Transverse colon (tissue), 4 donors: ENCODE measurements at regions of chr17 and their contacts with region 1.

Region 1: GRCh38 chr17:4913994-4914393 is 11.1 kb upstream of the CHRNE start:
- DNase-seq: no peak
- H3K4me3 ChIP-seq: no peak overlapping the region
- H3K27ac ChIP-seq: no peak overlapping the region
- H3K4me1 ChIP-seq: peaks cover 3 to 13% (median 10%) of the 10 kb centered on the region in 4 donors
- H3K27me3 ChIP-seq: no peaks in the 10 kb centered on the region
- CTCF ChIP-seq: peak in 1 of 5 experiments; percentile 25
- EP300 ChIP-seq: no peak
- POLR2A ChIP-seq: no peak

Region 2: GRCh38 chr17:4858882-4859260 is 55.1 kb before region 1 on chr17:
- in situ Hi-C with region 1: no loop called
- intact Hi-C with region 1: no loop called
- DNase-seq: peak; percentile 40
- H3K4me3 ChIP-seq: no peak overlapping the region
- H3K27ac ChIP-seq: peak overlapping the region; percentile 10 to 59 (median 56)
- H3K4me1 ChIP-seq: peaks cover 0 to 24% (median 12%) of the 10 kb centered on the region in 4 donors
- H3K27me3 ChIP-seq: no peaks in the 10 kb centered on the region
- CTCF ChIP-seq: no peak
- EP300 ChIP-seq: no peak
- POLR2A ChIP-seq: no peak

Region 3: GRCh38 chr17:4969551-4970173 is 55.7 kb after region 1 on chr17:
- in situ Hi-C with region 1: loop called in 1 of 4 experiments (anchors 10 kb)
- intact Hi-C with region 1: no loop called
- DNase-seq: no peak
- H3K4me3 ChIP-seq: no peak overlapping the region
- H3K27ac ChIP-seq: peak overlapping the region; percentile 91 to 98 (median 96)
- H3K4me1 ChIP-seq: peaks cover 14 to 33% (median 26%) of the 10 kb centered on the region in 4 donors
- H3K27me3 ChIP-seq: no peaks in the 10 kb centered on the region
- CTCF ChIP-seq: no peak
- EP300 ChIP-seq: no peak
- POLR2A ChIP-seq: no peak

Region 4: DNA sequence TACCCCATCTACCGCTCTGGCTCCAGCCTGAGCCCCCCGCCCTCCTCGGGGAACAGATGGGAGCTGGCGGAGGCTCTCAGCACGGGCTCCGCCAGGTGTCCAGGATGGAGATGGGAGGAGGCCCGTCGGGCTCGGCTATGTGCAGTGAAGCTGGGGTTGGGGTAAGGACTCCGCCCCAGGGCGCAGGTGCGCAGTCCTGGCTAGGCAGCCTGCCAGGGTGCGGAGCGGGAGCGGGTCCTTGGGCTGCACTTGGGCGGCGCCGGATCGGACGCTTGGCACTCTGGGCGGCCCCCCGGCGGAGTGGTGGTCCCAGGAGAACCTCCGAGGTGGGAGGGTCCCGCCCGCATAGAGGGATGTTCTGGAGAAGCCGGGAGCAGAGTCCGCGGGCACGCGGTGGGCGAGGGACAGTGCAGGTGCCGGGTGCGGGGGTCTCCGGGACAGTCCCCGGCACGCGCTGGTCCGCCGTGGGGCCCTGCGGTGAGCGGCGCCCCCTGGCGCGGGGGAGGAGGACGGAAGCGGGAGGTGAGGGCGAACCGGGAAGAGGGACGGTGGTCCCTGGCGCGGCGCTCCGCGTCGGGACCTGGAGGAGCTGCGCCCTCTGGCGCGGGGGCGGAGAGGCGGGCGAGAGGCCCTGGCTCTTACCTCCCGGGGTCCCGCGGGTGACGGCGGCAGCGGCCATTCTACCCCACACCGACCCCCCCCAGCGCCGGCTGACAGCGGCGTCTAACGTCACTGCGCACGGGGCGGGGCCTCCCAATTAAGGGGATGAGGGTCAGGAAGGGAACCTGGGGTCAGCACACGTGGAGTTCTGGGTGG is 73.2 kb after region 1 on chr17 and contains the start of gene CAMTA2:
- in situ Hi-C with region 1: loop called in 1 of 4 experiments (anchors 5 kb)
- intact Hi-C with region 1: no loop called
- DNase-seq: peak; percentile 93
- H3K4me3 ChIP-seq: peak within 1 kb of the TSS; percentile 66 to 91 (median 84)
- H3K27ac ChIP-seq: peak within 1 kb of the TSS; percentile 93 to 97 (median 94)
- H3K4me1 ChIP-seq: peaks cover 13 to 28% (median 27%) of the 10 kb centered on the region in 4 donors
- H3K27me3 ChIP-seq: no peaks in the 10 kb centered on the region
- CTCF ChIP-seq: peak; percentile 60 to 91 (median 75)
- EP300 ChIP-seq: no peak
- POLR2A ChIP-seq: peak; percentile 79
- total RNA-seq, gene CAMTA2: 35.9 to 71.8 (median 51.8) TPM

Region 5: DNA sequence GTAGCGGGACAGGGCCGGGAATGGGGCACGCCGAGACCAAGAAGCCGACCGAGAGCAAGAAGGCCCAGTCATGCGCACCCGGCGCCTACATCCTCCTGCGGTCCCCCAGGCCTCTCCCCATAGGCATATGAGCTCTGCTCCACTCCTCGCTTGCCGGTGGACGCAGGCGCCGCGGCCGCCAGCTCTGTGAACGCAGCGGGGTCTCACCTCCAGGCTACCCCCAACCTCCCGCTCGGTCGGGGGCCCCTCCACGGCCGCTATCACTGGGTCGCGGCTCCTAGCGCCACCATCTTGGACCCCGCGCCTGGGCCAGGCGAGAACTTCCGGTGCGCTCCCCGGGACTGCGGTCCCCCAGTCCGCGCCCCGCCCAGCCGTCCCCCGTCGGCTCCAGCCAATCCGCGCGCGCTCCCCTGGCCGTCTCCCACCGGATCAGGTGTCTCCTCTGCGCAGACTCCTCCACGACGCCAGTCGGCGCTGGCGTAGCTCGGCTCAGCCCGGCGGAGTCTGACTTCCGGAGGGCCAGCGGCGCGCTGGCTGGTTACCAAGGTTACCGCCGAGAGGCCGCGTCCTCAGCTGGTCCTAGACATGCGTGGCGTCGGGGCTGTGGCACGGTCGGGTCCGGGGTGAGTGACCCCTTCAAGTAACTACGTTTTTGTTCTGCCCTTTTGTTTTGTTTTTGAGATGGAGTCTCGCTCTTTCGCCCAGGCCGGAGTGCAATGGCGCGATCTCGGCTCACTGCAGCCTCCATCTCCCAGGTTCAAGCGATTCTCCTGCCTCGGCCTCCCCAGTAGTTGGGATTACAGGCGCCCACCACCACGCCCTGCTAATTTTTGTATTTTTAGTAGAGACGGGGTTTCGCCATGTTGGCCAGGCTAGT is 277.8 kb after region 1 on chr17 and contains the start of gene ZNF594:
- in situ Hi-C with region 1: no loop called
- intact Hi-C with region 1: no loop called
- DNase-seq: peak; percentile 96
- H3K4me3 ChIP-seq: peak within 1 kb of the TSS; percentile 66 to 86 (median 74)
- H3K27ac ChIP-seq: peak within 1 kb of the TSS; percentile 77 to 83 (median 80)
- H3K4me1 ChIP-seq: peaks cover 0 to 20% (median 7%) of the 10 kb centered on the region in 4 donors
- H3K27me3 ChIP-seq: no peaks in the 10 kb centered on the region
- CTCF ChIP-seq: peak; percentile 64 to 86 (median 74)
- EP300 ChIP-seq: no peak
- POLR2A ChIP-seq: peak; percentile 69
- total RNA-seq, gene ZNF594: 1.5 to 17.0 (median 4.5) TPM